PC-9 (cell line): ENCODE measurements at regions of chr3 and their contacts with region 1.

Region 1: DNA sequence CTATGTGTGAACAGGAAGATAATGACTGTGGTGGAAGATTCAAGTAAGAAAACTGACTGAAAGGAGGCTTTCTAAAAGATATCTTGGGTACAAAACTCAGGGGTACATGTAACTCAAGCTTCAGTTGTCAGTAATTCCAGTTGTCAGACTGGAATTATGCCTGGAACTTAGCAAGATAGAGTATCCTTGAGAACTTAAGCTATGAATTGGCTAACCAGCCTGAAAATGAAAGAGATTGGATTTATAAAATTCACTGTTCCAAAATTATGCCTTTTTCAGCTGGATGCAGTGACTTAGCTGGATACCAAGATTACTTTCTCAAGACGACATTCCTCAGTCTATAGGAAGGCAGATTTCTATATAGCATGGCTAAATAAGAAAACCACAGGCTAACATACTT is 221.9 kb upstream of the ZBTB20 start:
- DNase-seq: no peak
- H3K4me3 ChIP-seq: no peak overlapping the region
- H3K27ac ChIP-seq: no peak overlapping the region
- H3K4me1 ChIP-seq: no peaks in the 10 kb centered on the region
- H3K27me3 ChIP-seq: no peaks in the 10 kb centered on the region
- CTCF ChIP-seq: no peak

Region 2: DNA sequence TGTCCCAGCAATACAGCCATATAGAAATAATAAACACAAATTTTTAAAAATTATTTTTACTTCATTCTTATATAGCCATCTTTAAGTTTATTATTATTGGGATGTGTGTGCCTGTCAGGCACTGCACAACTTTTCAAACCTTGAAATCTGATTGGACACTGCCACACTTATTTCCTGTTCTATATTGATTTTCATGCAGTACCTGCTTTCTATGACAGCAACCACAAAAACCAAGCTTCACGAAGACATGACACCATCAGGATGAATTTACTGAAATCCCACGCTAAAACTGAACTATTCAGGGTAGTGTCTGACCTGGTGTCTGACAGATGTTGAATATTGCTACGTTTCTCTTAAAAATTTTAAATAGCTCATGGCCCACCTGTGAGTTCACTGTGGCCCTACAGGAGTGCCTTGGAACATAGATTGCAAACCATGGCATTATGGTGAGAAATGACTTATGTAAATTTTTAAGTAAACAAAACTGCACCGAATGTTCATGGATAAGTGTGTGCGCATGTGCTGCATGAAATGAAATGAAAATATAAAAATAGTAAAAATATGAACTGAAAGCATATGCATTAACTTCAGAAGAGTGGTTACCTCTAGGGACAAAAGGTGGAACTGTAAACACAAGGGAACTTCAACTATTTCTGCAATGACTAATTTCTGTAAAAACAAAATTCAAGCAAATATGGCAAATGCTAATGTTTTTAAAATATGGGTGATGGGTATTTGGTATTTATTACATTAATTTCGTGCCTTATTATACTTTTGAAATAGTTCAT is 374.3 kb before region 1 on chr3:
- CTCF ChIA-PET with region 1: no interaction called
- POLR2A ChIA-PET with region 1: no interaction called
- intact Hi-C with region 1: no loop called
- DNase-seq: no peak
- H3K4me3 ChIP-seq: no peak overlapping the region
- H3K27ac ChIP-seq: no peak overlapping the region
- H3K4me1 ChIP-seq: no peaks in the 10 kb centered on the region
- H3K27me3 ChIP-seq: no peaks in the 10 kb centered on the region
- CTCF ChIP-seq: no peak

Region 3: GRCh38 chr3:115325539-115325938 is 43.5 kb before region 1 on chr3:
- CTCF ChIA-PET with region 1: no interaction called
- POLR2A ChIA-PET with region 1: no interaction called
- intact Hi-C with region 1: loop called (anchors 2 kb)
- DNase-seq: peak in 1 of 2 experiments; percentile 35
- H3K4me3 ChIP-seq: no peak overlapping the region
- H3K27ac ChIP-seq: no peak overlapping the region
- H3K4me1 ChIP-seq: 0 out of 2 replicates have a peak, but pooled peaks cover 9% of the 10 kb centered on the region
- H3K27me3 ChIP-seq: no peaks in the 10 kb centered on the region
- CTCF ChIP-seq: no peak

Region 4: DNA sequence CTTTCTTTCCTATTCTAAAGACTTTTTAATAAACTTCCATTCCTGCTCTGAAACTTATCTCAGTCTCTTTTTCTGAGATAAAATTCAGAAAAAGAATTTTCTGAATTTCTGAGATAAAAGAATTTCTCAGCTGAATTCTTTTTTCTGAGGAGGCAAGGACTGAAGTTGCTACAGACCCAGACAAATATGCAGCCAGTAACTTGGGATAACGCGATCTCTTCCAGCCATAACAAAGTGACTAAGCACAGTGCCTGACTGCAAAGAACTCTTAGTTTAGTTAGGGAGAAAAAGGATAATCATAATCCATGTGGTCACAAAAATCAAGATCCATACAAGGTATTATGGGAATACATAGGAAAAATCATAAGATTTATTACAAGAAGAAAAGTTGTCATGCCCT is 32.3 kb after region 1 on chr3:
- CTCF ChIA-PET with region 1: no interaction called
- POLR2A ChIA-PET with region 1: no interaction called
- intact Hi-C with region 1: no loop called
- DNase-seq: no peak
- H3K4me3 ChIP-seq: no peak overlapping the region
- H3K27ac ChIP-seq: no peak overlapping the region
- H3K4me1 ChIP-seq: no peaks in the 10 kb centered on the region
- H3K27me3 ChIP-seq: no peaks in the 10 kb centered on the region
- CTCF ChIP-seq: no peak